Dorsolateral prefrontal cortex (tissue), 120 donors: ENCODE measurements at regions of chr20 and their contacts with region 1.

Region 1: DNA sequence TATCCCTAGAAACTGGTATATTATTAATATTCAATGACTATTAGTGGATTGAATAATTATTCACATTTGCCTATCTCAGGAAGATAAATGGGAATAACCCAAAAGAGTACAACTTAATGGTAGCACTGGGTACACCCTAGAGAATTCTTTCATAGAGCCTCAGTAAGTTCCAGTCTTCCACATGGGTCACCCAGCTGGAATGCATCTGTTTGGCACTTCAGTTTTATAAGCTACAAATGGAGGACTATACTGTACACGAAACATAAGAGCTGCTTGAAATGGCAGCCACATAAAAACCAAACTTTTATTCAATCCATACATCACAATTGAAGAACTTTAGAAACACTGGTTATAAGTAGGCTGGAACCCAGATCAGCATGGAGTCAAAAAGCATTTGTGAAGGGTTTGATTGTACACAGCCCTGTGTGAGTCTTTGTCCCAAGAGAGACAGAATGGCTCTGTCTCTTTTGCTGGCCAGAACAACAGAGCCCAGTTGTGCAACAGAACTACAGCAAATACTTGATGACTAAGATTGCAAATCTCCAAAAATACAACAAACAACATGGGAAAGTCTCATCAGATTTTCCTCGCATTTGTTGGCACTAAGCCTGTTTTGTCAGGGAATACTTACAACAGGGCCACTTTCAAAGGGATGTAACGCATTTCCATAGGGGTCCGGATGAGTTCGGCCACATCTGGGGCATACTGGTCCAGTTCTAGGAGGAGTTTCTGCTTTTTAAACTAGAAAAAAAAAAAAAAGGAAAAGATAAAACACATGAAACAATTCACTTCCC is 39.5 kb downstream of the PIGU start:
- DNase-seq: peak in 6 of 10 donors; percentile 51 to 81 (median 61)
- H3K4me3 ChIP-seq: peak overlapping the region in 4 of 59 donors; percentile 8 to 19 (median 12)
- H3K27ac ChIP-seq: peak overlapping the region; percentile 81 to 99 (median 95)
- H3K27me3 ChIP-seq: no peaks in the 10 kb centered on the region
- CTCF ChIP-seq: peak in 4 of 56 donors; percentile 8 to 25 (median 16)

Region 2: GRCh38 chr20:34232494-34233087 is 404.9 kb before region 1 on chr20:
- intact Hi-C with region 1: no loop called
- DNase-seq: no peak
- H3K4me3 ChIP-seq: no peak overlapping the region
- H3K27ac ChIP-seq: no peak overlapping the region
- H3K27me3 ChIP-seq: no peaks in the 10 kb centered on the region
- CTCF ChIP-seq: no peak

Region 3: DNA sequence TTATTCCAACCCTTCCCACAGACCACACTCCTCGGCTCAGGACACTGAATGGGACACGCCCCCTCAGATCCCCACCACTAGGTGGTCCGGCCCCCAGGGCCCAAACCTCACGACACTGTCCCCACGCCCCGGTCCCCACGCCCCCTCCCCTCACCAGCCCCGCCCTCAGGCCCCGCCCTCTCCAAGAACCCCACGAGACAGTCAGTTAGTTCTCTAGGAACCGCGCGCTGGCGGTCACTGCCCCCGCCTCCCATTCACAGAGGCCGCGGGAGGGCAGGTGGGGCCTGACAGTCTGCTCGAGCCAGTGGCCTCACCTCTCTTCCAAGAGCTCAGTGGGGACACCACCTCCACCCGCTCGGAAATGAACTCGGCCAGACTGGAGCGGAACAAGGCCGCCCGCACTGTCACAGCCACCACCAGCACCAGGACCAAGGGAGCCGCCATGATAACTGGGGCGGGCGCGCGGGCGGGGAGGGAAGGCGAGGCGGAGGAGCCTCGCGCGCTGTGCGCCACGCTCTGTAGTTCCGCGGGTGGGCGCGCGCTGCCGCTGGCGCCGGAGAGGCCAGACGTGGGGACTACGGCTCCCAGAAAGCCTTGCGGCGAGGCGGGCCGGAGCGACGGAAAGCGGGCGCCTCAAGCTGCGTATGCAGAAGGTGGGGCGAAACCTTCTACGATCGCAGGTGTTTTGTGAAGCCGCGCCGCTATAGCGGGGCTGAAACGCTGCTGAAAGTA is 39.4 kb after region 1 on chr20 and contains the start of gene PIGU:
- intact Hi-C with region 1: loop called in 1 of 2 experiments (anchors 5 kb)
- DNase-seq: peak; percentile 93 to 98 (median 96)
- H3K4me3 ChIP-seq: peak within 1 kb of the TSS; percentile 33 to 91 (median 75)
- H3K27ac ChIP-seq: peak within 1 kb of the TSS in 58 of 59 donors; percentile 35 to 93 (median 84)
- H3K27me3 ChIP-seq: no peaks in the 10 kb centered on the region
- CTCF ChIP-seq: peak in 54 of 56 donors; percentile 22 to 75 (median 52)
- total RNA-seq, gene PIGU: 15.5 to 38.4 (median 22.8) TPM